ENCODE measurements at regions of chr1 and their contacts with region 1.

Region 1: DNA sequence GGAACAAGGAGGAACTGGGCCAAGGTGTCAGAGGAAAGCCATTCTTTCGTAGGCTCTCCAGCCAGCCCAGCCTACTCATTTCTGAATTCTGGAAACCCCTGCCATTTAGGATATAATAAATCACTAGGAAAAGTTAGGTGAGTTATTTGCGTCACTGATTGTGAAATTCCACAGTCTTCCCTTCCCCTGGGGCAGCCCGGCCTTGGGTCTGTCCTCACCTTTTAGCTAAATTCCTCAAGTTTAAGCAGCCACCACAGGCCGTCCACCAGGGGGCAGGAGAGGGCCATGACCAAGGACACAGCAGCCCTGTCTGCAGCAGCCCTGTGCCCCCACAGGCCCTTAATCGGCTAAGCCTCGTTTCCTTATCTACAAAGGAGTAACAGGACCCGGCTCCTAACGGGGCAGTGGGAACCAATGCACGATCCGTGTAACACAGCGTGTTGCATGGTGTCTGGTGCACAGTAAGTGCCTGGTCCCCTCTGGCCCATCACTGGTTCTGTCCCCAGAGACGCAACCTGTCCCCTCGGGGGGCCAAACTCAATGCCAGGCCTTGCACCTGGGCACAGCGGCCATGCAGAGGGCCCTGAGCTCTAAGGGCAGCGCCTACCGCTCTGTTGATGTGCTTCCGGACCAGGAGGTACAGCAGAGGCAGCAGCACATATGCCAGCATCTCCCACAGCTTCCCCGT is 18.1 kb downstream of the GPR157 start:
- DNase-seq: peak; percentile 94 to 98
- H3K4me3 ChIP-seq: no peak overlapping the region
- H3K27ac ChIP-seq: no peak overlapping the region
- H3K4me1 ChIP-seq: no peaks in the 10 kb centered on the region; a peak in 2 of 7 replicates
- H3K27me3 ChIP-seq: no peaks in the 10 kb centered on the region
- CTCF ChIP-seq: peak; percentile 96 to 99 (median 97)
- EP300 ChIP-seq: no peak
- POLR2A ChIP-seq: no peak
- RAD21 ChIP-seq: peak; percentile 94 to 97

Region 2: GRCh38 chr1:8951231-8951630 is 159.6 kb before region 1 on chr1:
- CTCF ChIA-PET with region 1: no interaction called
- POLR2A ChIA-PET with region 1: no interaction called
- DNase-seq: no peak
- H3K4me3 ChIP-seq: no peak overlapping the region
- H3K27ac ChIP-seq: no peak overlapping the region
- H3K4me1 ChIP-seq: peaks cover 0 to 3% (median 1%) of the 10 kb centered on the region in 4 experiments; a peak in 1 of 7 replicates
- H3K27me3 ChIP-seq: no peaks in the 10 kb centered on the region
- CTCF ChIP-seq: no peak
- EP300 ChIP-seq: no peak
- POLR2A ChIP-seq: no peak
- RAD21 ChIP-seq: no peak

Region 3: DNA sequence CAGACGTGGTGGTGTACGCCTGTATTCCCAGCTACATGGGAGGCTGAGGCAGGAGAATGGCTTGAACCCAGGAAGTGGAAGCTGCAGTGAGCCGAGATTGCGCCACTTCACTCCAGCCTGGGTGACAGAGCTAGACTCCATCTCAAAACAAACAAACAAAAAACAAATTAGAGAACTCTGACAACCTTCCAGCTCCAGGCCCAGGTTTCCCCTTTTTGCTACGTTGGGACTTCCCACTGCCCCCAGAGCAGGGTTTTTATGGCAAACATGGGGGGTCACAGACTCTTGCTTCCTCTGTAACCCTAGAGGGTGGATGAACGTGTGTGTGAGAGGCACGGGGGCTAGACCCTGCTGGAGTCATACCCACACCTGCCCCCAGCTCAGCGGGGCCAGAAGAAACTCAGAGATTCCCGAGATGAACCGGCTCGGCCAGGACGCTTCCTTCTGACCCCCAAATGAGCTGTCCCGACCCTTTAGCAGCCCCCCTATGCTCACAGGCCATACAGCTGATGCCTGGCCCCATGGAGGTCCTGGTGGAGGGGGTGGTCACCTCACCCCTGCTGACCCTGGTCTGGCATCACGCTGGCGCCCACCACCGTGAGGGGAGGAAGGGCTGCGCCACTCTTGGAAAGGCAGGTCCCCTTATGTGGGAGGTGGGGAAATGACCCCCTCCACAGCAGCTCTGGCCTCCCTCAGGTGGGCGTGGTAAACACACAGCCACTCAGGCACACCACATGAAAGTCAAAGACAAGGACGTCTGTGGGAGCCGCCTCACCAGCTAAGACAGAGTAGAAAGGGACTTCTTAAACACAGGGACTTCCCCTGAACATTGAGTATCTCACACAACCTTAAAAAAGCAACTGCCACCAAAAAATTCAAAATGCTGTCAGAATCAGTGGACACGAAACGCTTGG is 10.9 kb after region 1 on chr1:
- CTCF ChIA-PET with region 1: interaction called, 21 read pairs
- POLR2A ChIA-PET with region 1: no interaction called
- DNase-seq: no peak
- H3K4me3 ChIP-seq: no peak overlapping the region
- H3K27ac ChIP-seq: no peak overlapping the region
- H3K4me1 ChIP-seq: 0 out of 7 replicates have a peak, but pooled peaks cover 0 to 2% (median 0%) of the 10 kb centered on the region in 4 experiments
- H3K27me3 ChIP-seq: no peaks in the 10 kb centered on the region
- CTCF ChIP-seq: no peak
- EP300 ChIP-seq: no peak
- POLR2A ChIP-seq: no peak
- RAD21 ChIP-seq: no peak

Region 4: GRCh38 chr1:9128520-9129265 is 17.9 kb after region 1 on chr1 and contains the start of gene GPR157:
- CTCF ChIA-PET with region 1: interaction called, 11 read pairs
- POLR2A ChIA-PET with region 1: interaction called, 3 read pairs
- DNase-seq: peak; percentile 33 to 89
- H3K4me3 ChIP-seq: peak within 1 kb of the TSS; percentile 42 to 72 (median 60)
- H3K27ac ChIP-seq: no peak within 1 kb of the TSS
- H3K4me1 ChIP-seq: peaks cover 0 to 9% (median 7%) of the 10 kb centered on the region in 4 experiments; a peak in 5 of 7 replicates
- H3K27me3 ChIP-seq: peaks cover 0 to 14% (median 11%) of the 10 kb centered on the region in 4 experiments; a peak in 5 of 7 replicates
- CTCF ChIP-seq: no peak
- EP300 ChIP-seq: no peak
- POLR2A ChIP-seq: peak in 1 of 2 experiments; percentile 41; a peak in 1 of 3 replicates
- RAD21 ChIP-seq: no peak
- total RNA-seq, gene GPR157: 9.8 and 11.0 TPM in 2 replicates

Measured in H1 (cell line).